Right ventricle myocardium inferior (tissue), 1 donor: ENCODE measurements at regions of chr3 and their contacts with region 1.

Region 1: GRCh38 chr3:12984023-12984823 is 89.0 kb downstream of the IQSEC1 start:
- DNase-seq: no peak
- ATAC-seq: peak; percentile 86

Region 2: DNA sequence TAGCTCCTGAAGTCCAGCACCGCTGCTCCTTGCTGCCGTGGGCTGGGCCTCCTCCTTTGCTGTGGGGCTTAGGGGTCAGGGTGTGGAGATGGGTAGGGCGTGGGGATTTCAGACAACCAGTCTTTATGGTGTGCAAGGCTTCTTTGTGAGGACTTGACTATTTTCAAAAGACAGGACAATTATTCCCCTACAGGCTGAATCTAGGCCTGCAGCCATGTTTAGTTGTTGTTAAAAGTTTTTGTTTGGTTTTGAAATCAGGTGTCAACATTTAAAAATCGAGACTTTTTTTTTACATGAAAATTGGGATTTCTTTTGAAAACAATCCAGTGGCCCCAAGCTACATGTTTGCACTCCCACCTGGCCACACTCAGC is 153.5 kb before region 1 on chr3:
- intact Hi-C with region 1: no loop called
- DNase-seq: no peak
- ATAC-seq: no peak

Region 3: DNA sequence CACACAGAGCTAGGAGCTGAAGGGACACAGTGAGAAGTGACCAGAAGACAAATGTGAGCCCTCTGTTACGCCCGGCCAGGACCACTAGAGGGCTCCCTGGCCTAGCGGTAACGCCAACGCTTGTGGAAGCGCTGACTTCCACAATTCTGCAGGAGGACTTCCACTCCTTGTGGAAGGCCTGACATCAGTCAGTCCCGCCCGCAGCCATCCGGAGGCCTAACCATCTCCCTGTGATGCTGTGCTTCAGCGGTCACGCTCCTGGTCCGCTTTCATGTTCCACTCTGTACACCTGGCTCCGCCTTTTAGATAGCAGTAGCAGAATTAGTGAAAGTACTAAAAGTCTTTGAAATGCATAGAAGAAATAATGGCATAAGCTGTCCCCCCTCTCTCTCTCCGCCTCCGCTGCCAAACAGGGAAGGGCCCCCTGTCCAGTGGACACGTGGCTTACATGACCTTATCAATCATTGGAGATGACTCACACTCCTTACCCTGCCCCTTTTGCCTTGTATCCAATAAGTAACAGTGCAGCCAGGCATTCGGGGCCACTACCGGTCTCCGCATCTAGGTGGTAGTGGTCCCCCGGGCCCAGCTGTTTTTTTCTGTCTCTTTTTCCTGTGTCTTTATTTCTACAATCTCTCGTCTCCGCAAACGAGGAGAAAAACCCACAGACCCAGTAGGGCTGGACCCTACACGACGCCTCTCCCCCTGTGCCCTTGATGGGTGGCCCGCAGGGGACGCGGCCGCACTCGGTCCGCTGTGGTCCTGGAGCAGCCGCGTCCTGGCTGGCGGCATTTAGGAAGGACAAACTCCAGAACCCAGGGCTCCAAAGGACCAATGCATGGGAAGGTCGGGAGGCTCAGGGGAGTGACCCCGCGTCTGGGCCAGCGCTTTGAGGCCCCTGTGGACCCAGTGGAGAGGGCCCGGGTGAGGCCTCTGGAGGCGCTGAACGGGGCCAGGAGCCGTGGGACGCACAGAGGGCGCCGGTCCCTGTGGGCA is 115.9 kb before region 1 on chr3:
- intact Hi-C with region 1: loop called (anchors 1 kb)
- DNase-seq: peak; percentile 91
- ATAC-seq: peak; percentile 95

Region 4: DNA sequence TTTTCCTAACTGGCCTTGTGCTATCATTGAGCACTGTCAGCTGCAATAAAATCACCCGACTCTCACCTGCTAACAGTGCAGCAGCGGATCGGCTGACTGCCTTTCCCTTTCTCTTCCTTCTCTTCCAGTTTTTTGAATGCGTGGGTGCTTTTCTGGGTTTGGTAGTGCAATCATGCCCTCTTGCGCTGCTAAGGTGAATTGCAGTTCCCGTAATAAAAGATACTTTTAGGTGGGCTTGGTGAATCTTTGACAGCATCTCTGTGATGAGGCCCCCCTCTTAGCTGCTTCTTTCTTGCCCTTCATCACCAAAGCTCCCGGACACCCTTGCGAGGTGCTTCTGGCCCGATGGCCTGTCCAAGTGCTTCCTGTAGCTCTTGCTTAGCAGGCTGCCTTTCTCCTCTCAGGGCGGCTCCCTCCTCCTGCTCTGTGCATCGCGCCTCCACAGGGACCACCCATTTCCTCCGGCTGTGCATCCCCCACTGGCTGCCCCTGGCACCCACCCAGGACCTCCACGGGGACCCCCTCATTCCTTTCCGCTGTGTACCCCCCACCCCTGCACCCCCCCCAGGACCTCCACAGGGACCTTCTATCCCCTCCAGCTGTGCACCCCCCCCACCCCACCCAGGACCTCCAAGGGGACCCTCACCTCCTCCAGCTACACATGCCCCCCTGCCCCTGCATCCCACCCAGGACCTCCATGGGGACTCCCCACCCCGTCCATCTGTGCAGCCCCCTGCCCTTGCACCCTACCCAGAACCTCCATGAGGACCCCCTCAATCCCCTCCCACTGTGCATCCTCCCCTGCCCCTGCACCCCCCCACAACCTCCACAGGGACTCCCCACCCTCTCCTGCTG is 92.0 kb before region 1 on chr3:
- intact Hi-C with region 1: loop called (anchors 5 kb)
- DNase-seq: peak; percentile 48
- ATAC-seq: peak; percentile 53

Region 5: DNA sequence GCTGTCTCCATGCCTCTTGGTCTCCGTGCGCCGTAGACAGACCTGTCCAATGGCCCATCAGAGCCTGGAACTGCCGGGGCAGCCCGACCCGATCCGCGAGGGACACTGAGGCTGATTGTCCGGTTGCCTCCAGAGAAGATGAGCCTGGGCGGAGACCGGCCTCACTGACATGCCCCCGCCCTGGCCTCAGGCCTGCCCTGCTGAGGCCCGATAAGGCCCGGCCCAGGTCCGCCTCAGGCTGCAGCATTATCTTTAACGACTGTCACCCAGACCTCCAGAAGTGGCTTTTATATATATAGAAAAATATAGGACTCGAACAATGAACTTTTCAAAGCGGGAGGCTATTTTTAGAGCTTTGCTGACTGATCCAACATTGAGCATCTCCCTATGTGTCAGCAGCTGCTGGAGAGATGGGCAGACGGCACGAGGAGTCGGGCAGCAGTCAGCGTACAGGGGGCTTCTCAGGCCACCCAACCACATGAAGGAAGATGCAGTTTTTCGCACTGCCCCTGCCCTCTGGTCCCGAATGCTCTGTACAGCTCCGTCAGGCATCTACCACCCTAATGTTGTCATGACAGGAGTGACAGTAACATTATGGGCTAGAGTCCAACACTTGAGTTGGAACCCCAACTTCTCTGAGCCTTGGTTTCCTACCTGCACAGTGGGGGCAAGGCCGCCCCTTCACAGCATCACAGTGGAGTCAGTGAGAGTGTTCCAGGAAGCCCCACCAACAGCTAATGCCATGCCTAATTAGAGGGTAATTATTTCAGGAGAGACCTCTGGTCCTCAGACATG is 30.8 kb before region 1 on chr3:
- intact Hi-C with region 1: loop called (anchors 2 kb)
- DNase-seq: no peak
- ATAC-seq: no peak